ENCODE measurements at regions of chr12 and their contacts with region 1.

Region 1: DNA sequence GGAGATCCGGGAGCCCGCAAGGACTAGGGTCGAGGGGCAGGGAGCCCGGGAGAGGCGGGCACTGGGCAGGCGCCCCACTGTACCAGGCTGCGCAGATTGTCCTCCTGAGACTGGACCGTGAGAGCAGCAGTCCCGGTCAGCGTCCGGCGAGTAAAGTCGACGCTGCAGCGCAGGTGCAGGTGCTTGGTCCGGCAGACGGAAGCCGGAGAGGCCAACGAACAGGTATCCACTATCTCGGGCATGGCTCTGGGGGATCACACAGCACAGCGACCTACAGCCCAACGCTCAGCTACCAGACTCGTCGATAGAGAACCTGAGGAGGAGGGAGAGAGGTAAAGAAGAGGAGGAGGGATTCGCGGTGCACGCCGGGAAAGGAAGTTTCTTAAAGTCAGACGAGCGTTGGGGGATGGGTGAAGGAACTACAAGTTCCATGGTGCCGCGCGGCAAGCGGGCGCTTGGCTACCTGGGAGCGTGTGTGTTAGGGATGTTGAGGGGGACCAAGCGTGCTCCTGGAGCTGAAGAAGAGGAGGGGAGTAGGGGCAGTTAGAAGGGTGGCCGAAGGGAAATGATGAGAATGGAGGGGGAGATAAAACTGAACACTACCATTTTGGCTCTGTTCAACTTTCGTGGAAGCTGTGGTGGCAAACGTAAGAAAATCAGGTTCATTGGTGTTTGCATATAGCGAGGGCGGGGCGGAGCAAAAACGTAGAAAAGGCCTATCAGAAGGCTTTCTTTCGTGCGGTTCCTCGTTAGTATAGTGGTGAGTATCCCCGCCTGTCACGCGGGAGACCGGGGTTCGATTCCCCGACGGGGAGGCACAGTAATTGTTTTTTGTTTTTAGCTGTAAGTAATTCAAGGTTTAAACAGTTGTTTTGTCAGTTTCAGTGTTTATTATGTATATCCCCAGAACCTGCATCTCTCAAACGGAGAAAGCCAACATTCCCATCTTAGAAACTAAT is at the start of gene LTA4H:
- DNase-seq: peak; percentile 88
- ATAC-seq: peak; percentile 86
- H3K4me3 Mint-ChIP-seq: no peak within 1 kb of the TSS
- H3K27ac Mint-ChIP-seq: no peak within 1 kb of the TSS
- H3K4me1 Mint-ChIP-seq: peaks cover 26% of the 10 kb centered on the region
- H3K27me3 Mint-ChIP-seq: no peaks in the 10 kb centered on the region
- CTCF ChIP-seq: no peak
- total RNA-seq, gene LTA4H: 119 and 124 TPM in 2 replicates

Region 2: GRCh38 chr12:95694136-95694535 is 341.4 kb before region 1 on chr12:
- CTCF ChIA-PET with region 1: no interaction called
- POLR2A ChIA-PET with region 1: no interaction called
- intact Hi-C with region 1: no loop called
- DNase-seq: no peak
- ATAC-seq: no peak
- H3K4me3 Mint-ChIP-seq: no peak overlapping the region
- H3K27ac Mint-ChIP-seq: no peak overlapping the region
- H3K4me1 Mint-ChIP-seq: no peaks in the 10 kb centered on the region
- H3K27me3 Mint-ChIP-seq: peaks cover 3% of the 10 kb centered on the region
- CTCF ChIP-seq: no peak

Region 3: GRCh38 chr12:96007729-96008128 is 27.8 kb before region 1 on chr12:
- CTCF ChIA-PET with region 1: no interaction called
- POLR2A ChIA-PET with region 1: no interaction called
- intact Hi-C with region 1: no loop called
- DNase-seq: no peak
- ATAC-seq: no peak
- H3K4me3 Mint-ChIP-seq: no peak overlapping the region
- H3K27ac Mint-ChIP-seq: no peak overlapping the region
- H3K4me1 Mint-ChIP-seq: no peaks in the 10 kb centered on the region
- H3K27me3 Mint-ChIP-seq: no peaks in the 10 kb centered on the region
- CTCF ChIP-seq: no peak

Region 4: DNA sequence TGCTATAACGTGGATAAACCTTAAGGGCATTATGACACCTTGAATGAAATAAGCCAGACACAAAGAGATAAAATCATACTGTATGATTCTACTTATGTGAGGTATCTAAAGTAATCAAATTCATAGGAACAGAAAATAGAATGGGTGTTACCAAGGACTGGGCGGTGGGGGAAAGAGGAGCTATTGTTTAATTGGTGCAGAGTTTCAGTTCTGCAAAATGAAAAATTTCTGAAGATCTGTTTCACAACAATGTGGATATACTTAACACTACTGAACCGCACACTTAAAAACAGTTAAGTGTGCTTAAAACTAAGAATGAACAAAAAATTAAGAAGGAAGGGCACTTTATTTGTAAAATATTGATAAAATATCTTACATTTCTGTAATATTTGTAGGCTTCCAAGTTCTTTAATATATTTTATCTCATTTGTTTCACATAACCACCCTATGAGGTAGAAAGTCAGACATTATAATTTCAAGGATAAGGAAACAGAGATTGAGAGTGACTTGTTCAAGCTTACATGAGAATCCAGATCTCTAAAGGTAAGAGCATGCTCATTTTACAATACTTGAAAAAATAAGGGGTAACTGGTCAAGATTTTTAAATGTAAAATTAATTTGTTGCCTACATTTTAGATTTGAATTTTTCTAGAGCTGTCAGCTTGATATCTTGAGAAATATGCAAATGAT is 15.1 kb before region 1 on chr12:
- CTCF ChIA-PET with region 1: interaction called, 3 read pairs
- POLR2A ChIA-PET with region 1: interaction called, 16 read pairs
- intact Hi-C with region 1: loop called (anchors 1 kb)
- DNase-seq: no peak
- ATAC-seq: peak; percentile 96
- H3K4me3 Mint-ChIP-seq: peak overlapping the region; percentile 63
- H3K27ac Mint-ChIP-seq: peak overlapping the region; percentile 90
- H3K4me1 Mint-ChIP-seq: peaks cover 33% of the 10 kb centered on the region
- H3K27me3 Mint-ChIP-seq: no peaks in the 10 kb centered on the region
- CTCF ChIP-seq: no peak

Region 5: DNA sequence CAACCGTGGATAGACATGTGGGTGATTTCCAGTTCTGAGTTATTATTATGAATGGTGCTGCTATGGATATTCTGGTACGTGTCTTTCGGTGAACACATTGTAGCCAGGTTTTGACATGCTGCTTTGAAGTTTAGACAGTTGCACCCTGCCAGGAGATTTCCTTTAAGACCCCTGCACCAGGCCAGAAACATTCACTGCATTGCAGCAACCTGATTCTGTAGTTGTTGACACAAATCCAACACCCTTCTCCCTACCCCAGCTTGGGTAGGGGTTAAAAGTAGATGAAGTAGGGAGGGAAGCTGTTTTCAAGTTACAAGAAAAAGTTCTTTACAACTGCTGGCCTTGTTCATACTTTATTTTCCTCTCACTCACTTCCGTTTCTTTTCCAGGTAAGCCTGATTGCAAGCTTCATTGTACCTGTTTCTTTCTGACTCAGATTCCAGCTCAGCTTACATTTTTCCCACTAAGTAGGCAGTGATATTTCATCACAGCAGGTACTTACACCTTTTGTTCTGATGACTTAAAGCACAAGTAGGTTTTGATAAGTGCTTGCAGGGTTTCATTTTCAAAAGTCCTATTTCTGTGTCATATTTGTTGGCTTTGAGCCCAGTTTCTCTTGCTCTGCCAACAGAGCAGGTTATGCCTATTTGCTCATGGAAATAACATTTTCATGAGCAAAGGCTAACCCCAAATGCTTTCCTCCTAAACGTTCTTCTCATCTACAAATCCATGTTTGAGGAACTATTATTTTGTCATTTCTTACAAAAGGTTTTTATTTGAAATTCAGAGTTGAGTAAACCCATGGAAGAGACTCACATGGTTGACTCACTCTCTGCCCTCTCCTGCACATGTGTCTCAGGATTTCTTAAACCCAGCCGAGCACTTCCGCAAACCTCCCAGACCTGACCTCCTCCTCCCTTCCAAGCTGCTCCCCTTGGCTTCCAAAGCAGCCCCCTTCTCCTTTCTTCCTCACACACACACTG is 12.0 kb after region 1 on chr12:
- CTCF ChIA-PET with region 1: interaction called, 3 read pairs
- POLR2A ChIA-PET with region 1: interaction called, 19 read pairs
- intact Hi-C with region 1: loop called (anchors 1 kb)
- DNase-seq: no peak
- ATAC-seq: peak; percentile 19
- H3K4me3 Mint-ChIP-seq: peak overlapping the region; percentile 53
- H3K27ac Mint-ChIP-seq: peak overlapping the region; percentile 88
- H3K4me1 Mint-ChIP-seq: peaks cover 69% of the 10 kb centered on the region
- H3K27me3 Mint-ChIP-seq: no peaks in the 10 kb centered on the region
- CTCF ChIP-seq: no peak

Region 6: GRCh38 chr12:96335270-96335669 is 299.7 kb after region 1 on chr12:
- CTCF ChIA-PET with region 1: no interaction called
- POLR2A ChIA-PET with region 1: no interaction called
- intact Hi-C with region 1: no loop called
- DNase-seq: no peak
- ATAC-seq: peak; percentile 28
- H3K4me3 Mint-ChIP-seq: no peak overlapping the region
- H3K27ac Mint-ChIP-seq: peak overlapping the region; percentile 3
- H3K4me1 Mint-ChIP-seq: peaks cover 14% of the 10 kb centered on the region
- H3K27me3 Mint-ChIP-seq: no peaks in the 10 kb centered on the region
- CTCF ChIP-seq: no peak

Region 7: GRCh38 chr12:96906849-96907670 is 871.5 kb after region 1 on chr12 and contains the start of gene NEDD1:
- CTCF ChIA-PET with region 1: no interaction called
- POLR2A ChIA-PET with region 1: no interaction called
- intact Hi-C with region 1: loop called (anchors 5 kb)
- DNase-seq: peak; percentile 85
- ATAC-seq: peak; percentile 85
- H3K4me3 Mint-ChIP-seq: peak within 1 kb of the TSS; percentile 95
- H3K27ac Mint-ChIP-seq: peak within 1 kb of the TSS; percentile 91
- H3K4me1 Mint-ChIP-seq: peaks cover 41% of the 10 kb centered on the region
- H3K27me3 Mint-ChIP-seq: peaks cover 2% of the 10 kb centered on the region
- CTCF ChIP-seq: no peak
- total RNA-seq, gene NEDD1: 15.0 and 16.3 TPM in 2 replicates